Vagina (tissue), 2 donors: ENCODE measurements at regions of chr15 and their contacts with region 1.

Region 1: DNA sequence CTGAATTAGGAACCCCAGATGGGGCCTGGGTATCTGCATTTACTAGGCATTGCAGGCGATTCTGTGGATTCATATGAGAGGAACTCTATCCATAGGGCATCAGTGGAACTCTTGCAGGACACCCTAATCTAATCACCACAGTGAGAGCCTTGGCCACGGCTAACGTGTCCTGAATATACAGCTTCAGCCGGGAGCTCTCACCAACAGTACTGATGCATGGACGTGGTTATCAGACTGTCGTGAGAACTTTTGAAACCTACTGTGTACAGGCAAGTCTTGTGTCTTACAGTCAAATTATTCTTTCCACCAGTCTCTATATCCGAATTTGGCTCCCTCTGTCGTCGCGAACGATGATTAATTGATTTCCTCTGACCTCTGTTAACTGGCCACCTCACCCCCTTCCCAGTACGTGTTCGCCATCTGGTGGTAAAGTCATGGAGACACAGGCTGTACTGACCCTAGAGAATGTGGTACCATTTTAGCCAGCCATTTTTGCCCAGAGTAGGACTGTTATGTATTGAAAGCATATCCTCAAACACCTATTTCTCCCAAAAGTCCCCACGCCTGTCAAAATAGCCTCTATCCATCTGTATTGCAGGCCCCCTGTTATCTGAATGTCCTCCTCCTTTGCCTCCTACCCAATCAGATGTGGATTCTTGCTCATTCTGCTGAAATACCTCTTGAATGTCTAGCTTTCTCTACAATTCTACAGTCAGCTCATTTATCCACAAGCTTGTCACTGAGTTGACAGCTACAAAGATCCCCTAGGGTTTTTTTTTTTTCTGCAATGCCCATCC is 39.7 kb downstream of the GLDN start:
- DNase-seq: no peak
- H3K4me3 ChIP-seq: no peak overlapping the region
- H3K27ac ChIP-seq: no peak overlapping the region
- H3K4me1 ChIP-seq: no peaks in the 10 kb centered on the region
- H3K27me3 ChIP-seq: no peaks in the 10 kb centered on the region
- CTCF ChIP-seq: peak; percentile 68 to 89 (median 74)
- POLR2A ChIP-seq: no peak

Region 2: GRCh38 chr15:51162865-51163762 is 218.1 kb before region 1 on chr15:
- intact Hi-C with region 1: loop called (anchors 5 kb)
- DNase-seq: no peak
- H3K4me3 ChIP-seq: peak overlapping the region in 1 of 2 donors; percentile 2
- H3K27ac ChIP-seq: peak overlapping the region; percentile 46
- H3K4me1 ChIP-seq: peaks cover 15% of the 10 kb centered on the region
- H3K27me3 ChIP-seq: no peaks in the 10 kb centered on the region
- CTCF ChIP-seq: peak; percentile 80 to 85 (median 84)
- POLR2A ChIP-seq: no peak

Region 3: DNA sequence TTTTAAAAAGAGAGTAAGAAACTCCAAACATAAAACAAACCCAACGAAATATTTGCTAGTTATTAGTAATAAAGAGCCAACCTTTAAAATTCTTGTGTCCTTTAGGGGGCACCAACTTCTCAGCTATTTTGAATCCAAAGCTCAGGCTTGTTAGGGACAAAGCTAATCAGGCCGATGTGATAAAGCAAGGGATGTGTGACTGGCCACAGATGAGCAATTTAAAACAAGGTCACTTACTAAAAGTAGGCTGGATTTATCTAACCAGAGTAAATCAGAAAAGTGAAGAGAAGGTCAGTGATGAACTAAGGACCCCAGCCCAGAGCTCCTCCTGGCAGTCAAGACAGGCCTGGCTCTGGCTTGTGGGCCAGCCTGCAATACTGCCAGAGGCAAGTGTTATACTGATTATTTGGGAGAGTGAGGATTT is 151.3 kb before region 1 on chr15:
- intact Hi-C with region 1: loop called (anchors 10 kb)
- DNase-seq: no peak
- H3K4me3 ChIP-seq: no peak overlapping the region
- H3K27ac ChIP-seq: no peak overlapping the region
- H3K4me1 ChIP-seq: peaks cover 10% of the 10 kb centered on the region
- H3K27me3 ChIP-seq: no peaks in the 10 kb centered on the region
- CTCF ChIP-seq: peak in 2 of 3 experiments; percentile 37 to 50
- POLR2A ChIP-seq: no peak

Region 4: GRCh38 chr15:51281368-51281967 is 99.7 kb before region 1 on chr15:
- intact Hi-C with region 1: loop called (anchors 2 kb)
- DNase-seq: no peak
- H3K4me3 ChIP-seq: no peak overlapping the region
- H3K27ac ChIP-seq: no peak overlapping the region
- H3K4me1 ChIP-seq: peaks cover 4% of the 10 kb centered on the region
- H3K27me3 ChIP-seq: no peaks in the 10 kb centered on the region
- CTCF ChIP-seq: peak in 1 of 3 experiments; percentile 34
- POLR2A ChIP-seq: no peak

Region 5: GRCh38 chr15:51348688-51349087 is 32.5 kb before region 1 on chr15:
- intact Hi-C with region 1: no loop called
- DNase-seq: no peak
- H3K4me3 ChIP-seq: no peak overlapping the region
- H3K27ac ChIP-seq: peak overlapping the region; percentile 69
- H3K4me1 ChIP-seq: peaks cover 7% of the 10 kb centered on the region
- H3K27me3 ChIP-seq: no peaks in the 10 kb centered on the region
- CTCF ChIP-seq: no peak
- POLR2A ChIP-seq: no peak